ENCODE measurements at regions of chr15 and their contacts with region 1.

Region 1: GRCh38 chr15:26082221-26083109 is 219.3 kb upstream of the ATP10A start:
- DNase-seq: peak; percentile 93
- ATAC-seq: peak; percentile 96
- H3K4me3 ChIP-seq: peak overlapping the region; percentile 63
- H3K27ac ChIP-seq: peak overlapping the region; percentile 62
- H3K4me1 ChIP-seq: peaks cover 6% of the 10 kb centered on the region
- H3K27me3 ChIP-seq: no peaks in the 10 kb centered on the region
- CTCF ChIP-seq: no peak
- POLR2A ChIP-seq: no peak
- RAD21 ChIP-seq: no peak

Region 2: DNA sequence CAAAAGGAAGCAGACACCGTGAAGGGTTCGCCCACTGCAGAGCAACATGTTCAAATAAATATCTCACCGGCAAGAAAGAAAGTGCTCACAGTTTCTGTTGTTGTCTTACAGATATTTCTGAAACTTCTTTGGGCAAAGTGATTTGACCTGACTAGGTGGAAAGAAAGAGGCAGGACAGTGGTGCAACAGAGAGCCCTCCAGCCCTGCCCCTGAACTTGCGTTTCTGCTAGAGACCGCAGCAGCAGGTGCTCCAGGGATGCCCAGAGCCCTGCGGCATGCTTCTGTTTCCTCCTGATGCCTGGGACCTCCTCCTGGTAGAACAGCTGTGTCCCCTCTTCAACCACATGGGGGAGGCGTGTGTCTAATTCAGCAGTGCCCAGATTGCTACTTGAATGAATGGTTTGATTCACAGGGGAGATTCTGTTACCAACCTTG is 342.8 kb before region 1 on chr15:
- CTCF ChIA-PET with region 1: no interaction called
- POLR2A ChIA-PET with region 1: no interaction called
- dilution Hi-C with region 1: no loop called
- in situ Hi-C with region 1: no loop called
- intact Hi-C with region 1: loop called (anchors 2 kb)
- DNase-seq: peak; percentile 64
- ATAC-seq: peak; percentile 72
- H3K4me3 ChIP-seq: no peak overlapping the region
- H3K27ac ChIP-seq: no peak overlapping the region
- H3K4me1 ChIP-seq: peaks cover 13% of the 10 kb centered on the region
- H3K27me3 ChIP-seq: no peaks in the 10 kb centered on the region
- CTCF ChIP-seq: peak; percentile 63
- POLR2A ChIP-seq: no peak
- RAD21 ChIP-seq: peak; percentile 70

Region 3: DNA sequence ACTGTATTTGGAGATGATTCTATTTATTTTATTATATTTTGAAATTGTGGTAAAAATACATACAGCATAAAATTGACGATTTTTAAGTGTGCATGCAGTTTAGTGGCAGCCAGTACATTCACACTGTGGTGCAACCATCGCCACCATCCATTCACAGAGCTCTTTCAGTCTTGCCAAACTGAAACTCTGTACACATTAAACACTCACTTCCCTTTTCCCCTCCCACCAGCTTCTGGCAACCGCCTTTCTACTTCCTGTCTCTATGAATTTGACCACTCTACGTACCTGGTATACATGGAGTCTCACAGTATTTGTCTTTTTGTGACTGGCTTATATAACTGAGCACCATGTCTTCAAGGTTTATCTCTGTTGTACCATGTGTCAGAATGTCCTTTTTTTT is 84.0 kb after region 1 on chr15:
- CTCF ChIA-PET with region 1: no interaction called
- POLR2A ChIA-PET with region 1: no interaction called
- dilution Hi-C with region 1: no loop called
- in situ Hi-C with region 1: no loop called
- intact Hi-C with region 1: no loop called
- DNase-seq: no peak
- ATAC-seq: no peak
- H3K4me3 ChIP-seq: no peak overlapping the region
- H3K27ac ChIP-seq: no peak overlapping the region
- H3K4me1 ChIP-seq: no peaks in the 10 kb centered on the region
- H3K27me3 ChIP-seq: no peaks in the 10 kb centered on the region
- CTCF ChIP-seq: no peak
- POLR2A ChIP-seq: no peak
- RAD21 ChIP-seq: no peak

Measured in IMR-90 (cell line).